ENCODE measurements at regions of chr15 and their contacts with region 1.

Region 1: DNA sequence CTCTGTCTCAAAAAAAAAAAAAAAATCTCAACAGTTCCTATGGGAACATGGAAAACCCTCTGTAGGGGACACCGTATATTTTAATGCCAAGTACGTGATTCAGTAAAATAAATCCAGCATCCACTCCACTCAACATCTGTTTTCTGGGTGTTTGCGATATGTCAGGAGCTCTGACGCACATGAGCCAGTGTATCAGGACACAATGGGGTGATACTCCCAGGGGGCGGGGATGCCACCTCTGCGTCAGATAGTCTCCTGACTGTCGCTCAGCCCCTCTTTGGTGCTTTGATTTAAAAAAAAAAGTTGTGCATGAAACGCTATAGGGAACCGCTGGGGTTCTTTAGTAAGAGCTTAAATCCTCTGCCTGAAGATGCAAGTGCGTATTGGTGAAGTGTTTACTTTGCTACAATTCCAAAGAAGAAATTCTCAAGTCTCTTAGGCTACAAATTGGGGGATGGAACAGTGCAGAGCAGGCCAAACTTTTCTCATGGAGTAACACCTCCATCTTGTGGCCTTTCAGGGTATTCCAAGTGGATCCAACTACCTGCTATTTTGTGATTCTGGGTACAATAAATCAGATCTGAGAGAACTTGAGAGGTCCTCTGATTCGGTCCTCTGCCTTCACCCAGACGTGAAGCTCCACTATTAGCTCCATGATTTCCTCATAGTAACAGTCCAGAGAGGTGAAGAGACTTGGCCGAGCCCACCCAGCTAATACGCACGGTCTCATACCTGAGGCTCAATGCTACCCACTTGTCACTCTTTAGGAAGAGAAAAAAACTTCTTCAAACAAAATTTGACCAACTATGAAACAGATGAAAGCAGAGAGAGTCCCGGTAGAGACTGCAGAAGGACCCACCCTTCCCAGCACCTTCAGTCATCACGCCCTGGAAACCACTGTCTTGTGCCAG is 9.3 kb upstream of the NR2E3 start:
- DNase-seq: peak; percentile 43 to 87
- H3K4me3 ChIP-seq: no peak overlapping the region
- H3K27ac ChIP-seq: no peak overlapping the region
- H3K4me1 ChIP-seq: peaks cover 0 to 5% (median 2%) of the 10 kb centered on the region in 4 donors
- H3K27me3 ChIP-seq: no peaks in the 10 kb centered on the region
- CTCF ChIP-seq: peak in 5 of 7 experiments; percentile 75 to 86 (median 80)
- EP300 ChIP-seq: no peak
- POLR2A ChIP-seq: no peak

Region 2: DNA sequence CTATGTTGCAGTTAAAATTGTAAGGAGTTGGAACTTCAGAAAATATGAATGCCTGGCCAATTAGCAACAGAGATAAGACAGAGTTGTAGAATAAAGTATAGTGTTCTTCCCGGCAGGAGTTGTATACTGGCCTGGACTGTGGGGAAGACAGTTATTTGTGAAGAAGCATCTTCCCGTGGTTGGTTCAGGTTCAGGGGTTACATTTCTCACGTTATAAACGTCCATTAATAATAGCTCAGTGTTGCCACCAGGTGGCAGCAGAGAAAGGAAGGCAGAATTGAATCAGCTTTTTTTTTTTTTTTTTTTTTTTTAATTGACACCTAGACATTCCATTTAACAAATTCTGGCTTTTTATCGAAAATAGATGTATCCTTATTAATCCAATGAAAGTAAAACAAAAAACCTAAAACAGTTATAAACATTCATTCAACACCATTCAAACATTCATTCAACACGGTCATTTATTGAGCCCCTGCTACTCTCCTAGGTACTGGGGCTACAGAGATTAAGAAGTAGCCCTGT is 57.2 kb before region 1 on chr15:
- intact Hi-C with region 1: loop called (anchors 10 kb)
- DNase-seq: peak; percentile 73 to 83
- H3K4me3 ChIP-seq: no peak overlapping the region
- H3K27ac ChIP-seq: no peak overlapping the region
- H3K4me1 ChIP-seq: peaks cover 0 to 23% (median 2%) of the 10 kb centered on the region in 4 donors
- H3K27me3 ChIP-seq: no peaks in the 10 kb centered on the region
- CTCF ChIP-seq: peak in 5 of 7 experiments; percentile 49 to 80 (median 73)
- EP300 ChIP-seq: no peak
- POLR2A ChIP-seq: no peak